HCT116 (cell line): ENCODE measurements at regions of chr12 and their contacts with region 1.

Region 1: GRCh38 chr12:64273527-64274403 is 51.7 kb upstream of the KICS2 start:
- DNase-seq: peak; percentile 53
- ATAC-seq: peak; percentile 97
- H3K4me3 ChIP-seq: no peak overlapping the region
- H3K27ac ChIP-seq: no peak overlapping the region
- H3K4me1 ChIP-seq: peaks cover 0 to 7% of the 10 kb centered on the region in 2 experiments; a peak in 1 of 4 replicates
- H3K27me3 ChIP-seq: no peaks in the 10 kb centered on the region
- CTCF ChIP-seq: peak; percentile 69 to 82 (median 74)
- POLR2A ChIP-seq: no peak
- RAD21 ChIP-seq: peak; percentile 89

Region 2: GRCh38 chr12:64212119-64212746 is 61.5 kb before region 1 on chr12:
- CTCF ChIA-PET with region 1: no interaction called
- POLR2A ChIA-PET with region 1: no interaction called
- RAD21 ChIA-PET with region 1: no interaction called
- intact Hi-C with region 1: no loop called
- DNase-seq: no peak
- ATAC-seq: no peak
- H3K4me3 ChIP-seq: no peak overlapping the region
- H3K27ac ChIP-seq: no peak overlapping the region
- H3K4me1 ChIP-seq: no peaks in the 10 kb centered on the region
- H3K27me3 ChIP-seq: no peaks in the 10 kb centered on the region
- CTCF ChIP-seq: no peak
- POLR2A ChIP-seq: no peak
- RAD21 ChIP-seq: no peak

Region 3: GRCh38 chr12:64293654-64294364 is 20.0 kb after region 1 on chr12:
- CTCF ChIA-PET with region 1: no interaction called
- POLR2A ChIA-PET with region 1: no interaction called
- RAD21 ChIA-PET with region 1: no interaction called
- intact Hi-C with region 1: no loop called
- DNase-seq: no peak
- ATAC-seq: no peak
- H3K4me3 ChIP-seq: no peak overlapping the region
- H3K27ac ChIP-seq: no peak overlapping the region
- H3K4me1 ChIP-seq: no peaks in the 10 kb centered on the region
- H3K27me3 ChIP-seq: no peaks in the 10 kb centered on the region
- CTCF ChIP-seq: no peak
- POLR2A ChIP-seq: no peak
- RAD21 ChIP-seq: no peak

Region 4: DNA sequence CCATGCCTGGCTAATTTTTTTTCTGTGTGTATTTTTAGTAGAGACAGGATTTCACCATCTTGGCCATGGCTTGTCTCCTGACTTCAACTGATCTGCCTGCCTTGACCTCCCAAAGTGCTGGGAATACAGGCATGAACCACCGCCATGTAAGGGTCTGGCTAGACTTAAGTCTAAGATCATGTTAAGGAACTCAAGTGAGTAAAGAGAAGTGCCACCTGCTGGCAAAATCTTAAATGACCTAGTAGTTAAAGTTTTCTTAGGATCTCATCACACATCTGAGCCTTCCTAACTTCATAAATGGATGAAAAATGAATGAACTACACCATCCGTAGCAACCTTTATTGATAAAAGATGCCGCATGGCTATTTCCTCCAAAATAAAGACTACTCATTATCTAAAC is 118.5 kb after region 1 on chr12:
- CTCF ChIA-PET with region 1: interaction called, 3 read pairs
- POLR2A ChIA-PET with region 1: no interaction called
- RAD21 ChIA-PET with region 1: no interaction called
- intact Hi-C with region 1: loop called (anchors 1 kb)
- DNase-seq: no peak
- ATAC-seq: peak; percentile 83
- H3K4me3 ChIP-seq: no peak overlapping the region
- H3K27ac ChIP-seq: no peak overlapping the region
- H3K4me1 ChIP-seq: no peaks in the 10 kb centered on the region; a peak in 1 of 4 replicates
- H3K27me3 ChIP-seq: no peaks in the 10 kb centered on the region
- CTCF ChIP-seq: peak; percentile 32 to 48 (median 45); a peak in 5 of 6 replicates
- POLR2A ChIP-seq: no peak
- RAD21 ChIP-seq: peak; percentile 59

Region 5: DNA sequence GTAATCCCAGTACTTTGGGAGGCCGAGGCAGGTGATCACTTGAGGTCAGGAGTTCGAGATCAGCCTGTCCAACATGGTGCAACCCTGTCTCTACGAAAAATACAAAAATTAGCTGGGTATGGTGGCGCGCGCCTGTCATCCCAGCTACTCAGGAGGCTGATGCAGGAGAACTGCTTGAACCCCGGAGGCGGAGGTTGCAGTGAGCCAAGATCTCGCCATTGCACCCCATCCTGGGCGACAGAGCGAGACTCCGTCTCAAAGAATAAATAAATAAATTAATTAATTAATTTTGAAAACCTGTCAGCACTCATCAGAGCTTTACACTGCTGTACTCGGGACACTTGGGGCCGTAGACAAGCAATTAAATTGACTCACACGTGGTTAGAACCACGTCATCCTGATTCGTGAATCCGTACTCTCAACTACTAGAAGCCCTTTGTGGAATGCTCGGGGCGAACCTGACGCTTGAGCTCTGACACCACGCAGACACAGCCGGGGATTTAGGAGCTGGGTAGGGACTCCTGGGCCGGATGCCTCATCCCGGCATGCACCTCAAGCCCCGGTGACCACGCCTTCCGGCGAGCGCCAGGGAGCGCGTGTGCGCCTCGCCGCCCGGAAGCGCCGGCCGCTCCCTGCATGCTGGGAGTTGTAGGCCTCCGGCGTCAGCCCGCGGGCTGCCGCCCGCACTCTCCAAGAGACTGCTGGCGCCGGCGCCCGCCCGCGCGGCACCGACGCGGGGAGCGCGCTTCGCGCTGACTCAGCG is 130.1 kb after region 1 on chr12 and contains the start of gene XPOT:
- CTCF ChIA-PET with region 1: no interaction called
- POLR2A ChIA-PET with region 1: no interaction called
- RAD21 ChIA-PET with region 1: no interaction called
- intact Hi-C with region 1: loop called (anchors 1 kb)
- DNase-seq: peak; percentile 95
- ATAC-seq: peak; percentile 94
- H3K4me3 ChIP-seq: peak within 1 kb of the TSS; percentile 76 to 95
- H3K27ac ChIP-seq: peak within 1 kb of the TSS; percentile 96
- H3K4me1 ChIP-seq: peaks cover 0 to 28% of the 10 kb centered on the region in 2 experiments; a peak in 2 of 4 replicates
- H3K27me3 ChIP-seq: no peaks in the 10 kb centered on the region
- CTCF ChIP-seq: no peak
- POLR2A ChIP-seq: peak; percentile 96
- RAD21 ChIP-seq: no peak
- total RNA-seq, gene XPOT: 120 TPM